Right ventricle myocardium inferior (tissue), 1 donor: ENCODE measurements at regions of chr3 and their contacts with region 1.

Region 1: DNA sequence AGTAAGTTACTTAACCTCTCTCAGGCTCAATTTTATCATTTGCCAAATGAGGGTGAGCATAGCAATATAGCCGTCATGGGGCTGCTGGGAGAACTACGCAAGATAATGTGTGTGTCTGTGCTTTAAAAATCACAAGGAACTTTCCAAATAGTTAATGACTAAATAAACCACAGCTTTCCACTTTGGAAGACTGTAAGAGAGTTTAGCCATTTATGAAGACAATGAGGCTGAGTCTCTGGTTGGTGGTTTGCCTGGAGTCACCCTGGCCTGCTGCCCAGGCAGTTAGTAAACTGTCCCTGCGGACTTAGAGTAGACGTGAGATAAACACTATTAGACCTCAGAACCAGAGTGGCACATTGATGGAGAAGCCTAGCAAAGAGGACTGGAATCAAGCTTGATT is 357.7 kb downstream of the CLSTN2 start:
- DNase-seq: peak; percentile 75
- ATAC-seq: peak; percentile 65

Region 2: DNA sequence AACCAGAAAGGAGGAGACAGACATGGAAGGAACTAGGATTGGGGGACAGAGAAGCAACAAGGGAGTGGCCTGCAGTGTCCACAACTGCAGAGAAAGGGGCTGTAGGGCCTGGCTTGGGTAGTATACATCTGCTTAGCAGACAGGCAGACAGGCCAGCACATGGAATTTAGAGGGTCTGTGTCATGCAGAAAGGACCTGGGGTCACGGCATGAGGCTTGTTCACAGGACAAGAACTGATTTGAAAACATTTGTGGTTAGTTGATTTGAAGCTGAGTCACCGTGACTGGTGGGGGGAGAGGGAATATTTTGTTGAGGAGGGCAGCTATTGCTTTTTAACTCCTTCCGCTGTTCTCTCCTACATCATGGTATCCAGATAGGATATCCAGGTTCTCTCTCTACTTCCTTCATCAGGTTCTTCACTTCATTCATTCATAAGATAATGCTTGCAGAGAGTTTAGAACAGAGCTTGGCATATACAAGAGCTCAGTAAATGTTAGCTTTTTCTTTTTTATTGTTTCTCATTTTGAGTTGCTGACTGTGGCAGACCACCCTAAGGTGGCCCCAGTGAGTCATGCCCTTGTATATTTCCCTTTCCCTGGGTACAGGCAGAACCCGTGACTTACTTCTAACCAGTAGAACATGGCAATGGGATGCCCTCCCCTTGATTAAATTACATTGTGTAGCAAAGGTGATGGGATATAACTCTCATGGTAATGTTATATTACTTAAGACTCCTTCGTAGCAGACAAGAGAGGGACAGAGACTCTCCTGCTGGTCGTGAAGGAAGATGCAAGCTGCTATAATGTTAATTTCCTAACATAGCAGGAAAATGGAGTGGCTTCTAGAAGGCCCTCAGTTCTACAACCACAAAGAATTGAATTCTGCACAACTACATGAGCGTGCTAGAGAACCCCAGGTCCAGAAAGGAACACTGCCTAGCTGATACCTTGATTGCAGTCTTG is 519.9 kb before region 1 on chr3:
- intact Hi-C with region 1: no loop called
- DNase-seq: no peak
- ATAC-seq: no peak

Region 3: DNA sequence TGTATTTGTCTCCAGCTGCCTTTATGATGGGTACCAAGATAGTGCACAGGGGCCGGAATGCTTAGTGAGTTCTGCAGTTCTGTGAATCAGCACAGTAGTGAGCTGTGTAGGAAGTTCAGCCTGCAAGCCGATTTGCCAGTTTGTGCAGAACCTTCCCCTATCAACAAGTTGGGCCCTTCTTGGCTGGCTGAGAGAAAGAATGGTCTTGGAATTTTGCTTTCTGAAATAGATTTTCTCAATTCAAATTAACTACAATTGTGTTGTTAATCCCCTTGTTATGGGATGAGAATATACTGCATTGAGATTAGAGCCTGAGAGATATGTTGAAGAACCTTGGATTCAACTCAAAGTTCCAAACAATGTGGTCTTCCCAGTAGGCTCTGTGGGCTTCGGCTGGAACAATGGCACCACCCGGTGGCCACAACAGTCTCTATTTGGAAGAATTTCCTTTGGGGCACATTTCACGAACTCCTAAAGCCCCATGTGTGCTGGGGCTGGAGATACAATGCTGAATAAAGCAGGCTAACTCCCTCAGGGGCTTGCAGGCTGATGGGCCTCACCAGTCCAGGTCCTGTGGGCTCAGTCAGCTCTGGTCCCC is 444.3 kb after region 1 on chr3:
- intact Hi-C with region 1: loop called (anchors 10 kb)
- DNase-seq: no peak
- ATAC-seq: peak; percentile 78